Mucosa of descending colon (tissue), 3 donors: ENCODE measurements at regions of chr4 and their contacts with region 1.

Region 1: GRCh38 chr4:76179398-76180318 is 31.5 kb upstream of the NUP54 start:
- DNase-seq: peak; percentile 81 to 98 (median 89)
- ATAC-seq: peak; percentile 98
- H3K4me3 ChIP-seq: no peak overlapping the region
- H3K4me1 ChIP-seq: no peaks in the 10 kb centered on the region
- CTCF ChIP-seq: peak; percentile 77

Region 2: DNA sequence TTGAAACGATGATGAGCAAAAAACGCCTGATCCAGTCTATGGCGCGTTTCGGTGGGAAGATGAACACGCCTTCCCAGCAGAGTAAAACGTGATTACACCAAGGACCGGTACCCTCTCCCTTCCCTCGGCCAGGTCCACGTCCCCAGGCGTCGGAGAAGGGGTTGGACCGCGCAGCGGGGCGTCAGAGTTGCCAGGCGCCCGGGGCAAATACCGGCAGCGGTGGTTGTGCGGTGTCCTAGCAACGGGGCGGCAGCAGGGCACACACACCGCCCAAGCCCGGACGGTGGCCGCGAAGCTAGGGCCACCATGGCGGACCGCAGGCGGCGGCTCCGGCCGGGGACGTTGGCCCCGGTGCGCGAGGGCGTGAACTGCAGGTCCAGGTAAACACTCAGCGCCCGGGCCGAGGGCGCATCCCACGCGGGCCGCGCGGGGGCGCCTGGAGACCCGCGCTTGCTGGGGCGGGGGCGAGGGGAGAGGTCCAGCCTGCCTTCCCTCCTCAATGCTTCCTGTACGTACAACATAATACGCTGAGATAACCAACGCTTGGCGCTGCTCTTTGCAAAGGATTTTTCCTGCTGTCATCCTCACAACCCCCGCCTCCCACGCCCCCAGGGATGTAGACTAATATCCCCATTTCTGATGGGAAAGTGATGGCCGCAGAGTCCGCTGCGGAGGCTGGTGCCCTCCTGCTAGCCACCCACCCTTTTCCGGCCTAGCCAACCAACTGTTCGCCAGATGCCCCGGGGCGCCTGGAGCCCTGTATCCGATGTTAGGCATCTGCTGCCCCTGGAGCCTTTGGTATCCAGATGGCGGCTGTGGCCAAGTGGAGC is 72.0 kb after region 1 on chr4 and contains the start of gene FAM47E:
- intact Hi-C with region 1: loop called in 1 of 2 experiments (anchors 10 kb)
- DNase-seq: peak; percentile 82 to 90 (median 88)
- ATAC-seq: peak; percentile 99
- H3K4me3 ChIP-seq: peak within 1 kb of the TSS; percentile 1
- H3K4me1 ChIP-seq: no peaks in the 10 kb centered on the region
- CTCF ChIP-seq: no peak
- total RNA-seq, gene FAM47E: 3.3 to 9.8 (median 6.1) TPM